ENCODE measurements at regions of chr5 and their contacts with region 1.

Region 1: DNA sequence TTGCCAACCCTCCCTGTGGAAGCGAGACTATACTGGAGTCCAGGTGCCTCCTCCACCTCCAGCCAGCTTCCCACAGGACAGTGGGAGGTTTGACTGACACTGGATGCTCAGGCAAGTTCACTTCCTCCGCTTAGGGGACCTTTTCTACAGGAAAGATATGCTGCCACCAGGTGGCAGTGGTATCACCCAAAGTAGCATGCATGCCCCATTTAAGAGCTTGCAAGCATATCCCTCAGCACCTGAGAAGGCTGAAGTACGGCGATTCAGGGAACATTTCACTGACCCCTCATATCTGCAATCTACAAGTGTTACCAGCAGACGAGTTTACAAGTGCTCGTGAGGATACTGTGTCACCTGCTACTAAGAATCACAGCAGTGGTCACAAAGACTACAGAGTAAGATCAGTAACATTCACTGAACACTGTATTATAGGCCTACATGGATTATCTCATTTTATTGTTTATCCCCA is 75.5 kb downstream of the KLHL3 start:
- DNase-seq: peak; percentile 54
- ATAC-seq: peak; percentile 91

Region 2: DNA sequence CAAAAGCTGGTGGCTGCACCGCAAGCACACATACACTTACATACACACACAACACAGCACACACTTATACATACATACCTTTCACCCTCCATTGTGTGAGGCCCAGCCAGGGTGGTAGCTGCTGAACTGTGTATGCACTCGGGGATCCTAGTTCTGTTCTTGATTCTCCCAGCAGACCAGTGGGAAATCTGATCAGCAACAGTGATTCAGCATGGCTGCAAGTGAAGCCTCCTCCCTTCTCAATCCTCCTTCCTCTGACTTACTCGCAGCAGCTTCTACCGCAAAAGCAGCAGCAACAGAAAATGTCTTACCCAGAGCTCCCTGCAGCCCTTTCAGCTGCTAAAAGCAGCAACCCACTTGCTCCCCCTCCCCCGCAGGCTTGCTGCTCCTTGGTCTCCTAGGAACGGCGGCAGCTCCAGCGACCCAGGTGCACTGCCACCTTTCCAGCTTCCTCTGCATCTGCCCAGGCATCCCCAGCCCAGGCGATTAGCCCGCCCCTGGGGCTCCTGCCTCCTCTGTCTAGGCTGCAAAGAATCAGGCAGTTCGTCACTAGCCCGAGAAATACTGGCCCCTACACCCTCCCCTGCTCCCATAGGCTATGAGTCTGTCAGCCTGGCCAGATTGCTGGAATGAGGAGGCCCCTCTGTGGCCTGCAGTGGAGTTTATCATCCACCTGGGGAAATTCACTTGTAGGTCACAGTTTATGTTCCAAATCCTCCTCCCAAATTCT is 75.3 kb after region 1 on chr5 and contains the start of gene KLHL3:
- intact Hi-C with region 1: loop called (anchors 2 kb)
- DNase-seq: peak; percentile 49
- ATAC-seq: peak; percentile 57
- total RNA-seq, gene KLHL3: 24.5 TPM